ENCODE measurements at regions of chr13 and their contacts with region 1.

Region 1: GRCh38 chr13:39037880-39038568 is at the starts of genes NHLRC3 and PROSER1:
- DNase-seq: peak; percentile 91
- H3K4me3 ChIP-seq: peak within 1 kb of the TSS; percentile 74 to 98 (median 77)
- H3K27ac ChIP-seq: peak within 1 kb of the TSS; percentile 79
- H3K4me1 ChIP-seq: peaks cover 11% of the 10 kb centered on the region
- H3K27me3 ChIP-seq: no peaks in the 10 kb centered on the region
- CTCF ChIP-seq: no peak
- total RNA-seq, gene NHLRC3: 15.9 to 30.7 TPM
- total RNA-seq, gene PROSER1: 22.3 to 52.4 TPM

Region 2: GRCh38 chr13:38951525-38952313 is 86.3 kb before region 1 on chr13:
- CTCF ChIA-PET with region 1: no interaction called
- dilution Hi-C with region 1: no loop called
- in situ Hi-C with region 1: no loop called
- intact Hi-C with region 1: loop called (anchors 5 kb)
- DNase-seq: no peak
- H3K4me3 ChIP-seq: no peak overlapping the region
- H3K27ac ChIP-seq: no peak overlapping the region
- H3K4me1 ChIP-seq: peaks cover 15% of the 10 kb centered on the region
- H3K27me3 ChIP-seq: no peaks in the 10 kb centered on the region
- CTCF ChIP-seq: no peak

Region 3: DNA sequence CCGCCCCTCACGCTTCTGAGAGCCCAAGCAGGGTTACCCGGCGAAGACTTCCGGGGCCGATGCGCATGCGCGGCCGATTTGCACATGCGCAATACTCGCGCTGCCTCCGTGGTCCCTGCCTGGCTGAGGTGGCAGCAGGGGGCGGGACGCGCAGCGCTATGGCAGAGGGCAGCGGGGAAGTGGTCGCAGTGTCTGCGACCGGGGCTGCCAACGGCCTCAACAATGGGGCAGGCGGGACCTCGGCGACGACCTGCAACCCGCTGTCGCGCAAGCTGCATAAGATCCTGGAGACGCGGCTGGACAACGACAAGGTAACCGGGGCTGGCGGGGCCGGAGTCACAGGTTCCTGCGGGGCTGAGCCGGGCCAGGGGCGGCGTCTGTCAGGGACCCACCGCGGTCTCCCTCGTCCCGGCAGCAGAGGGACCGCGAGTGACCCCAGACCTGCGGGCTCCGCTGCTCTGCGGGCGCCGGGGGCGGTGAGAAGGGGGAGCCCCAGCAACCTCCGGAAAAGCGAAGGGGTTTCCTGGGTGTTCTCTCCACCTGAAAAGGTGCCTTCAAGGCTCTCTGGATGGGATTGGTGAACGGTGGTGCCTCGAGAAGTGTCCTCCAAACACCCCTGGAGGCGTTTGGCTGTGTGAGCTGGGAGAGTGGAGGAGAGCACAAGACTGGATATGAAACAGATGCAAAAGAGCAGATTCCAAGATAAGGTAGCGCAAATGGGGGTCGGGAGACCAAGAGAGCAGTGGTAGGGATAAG is 617.7 kb after region 1 on chr13 and contains the start of gene COG6:
- CTCF ChIA-PET with region 1: no interaction called
- dilution Hi-C with region 1: no loop called
- in situ Hi-C with region 1: no loop called
- intact Hi-C with region 1: loop called (anchors 5 kb)
- DNase-seq: peak; percentile 77
- H3K4me3 ChIP-seq: peak within 1 kb of the TSS; percentile 79 to 97 (median 93)
- H3K27ac ChIP-seq: peak within 1 kb of the TSS; percentile 36
- H3K4me1 ChIP-seq: no peaks in the 10 kb centered on the region
- H3K27me3 ChIP-seq: no peaks in the 10 kb centered on the region
- CTCF ChIP-seq: peak in 1 of 2 donors; percentile 18
- total RNA-seq, gene COG6: 28.3 to 41.6 TPM

Region 4: GRCh38 chr13:40172149-40172591 is 1134.1 kb after region 1 on chr13:
- CTCF ChIA-PET with region 1: no interaction called
- dilution Hi-C with region 1: no loop called
- in situ Hi-C with region 1: no loop called
- intact Hi-C with region 1: loop called (anchors 5 kb)
- DNase-seq: peak; percentile 63
- H3K4me3 ChIP-seq: peak overlapping the region in 1 of 3 experiments; percentile 15
- H3K27ac ChIP-seq: peak overlapping the region; percentile 19
- H3K4me1 ChIP-seq: peaks cover 40% of the 10 kb centered on the region
- H3K27me3 ChIP-seq: no peaks in the 10 kb centered on the region
- CTCF ChIP-seq: peak in 1 of 2 donors; percentile 6